HEK293 (cell line): ENCODE measurements at regions of chr7 and their contacts with region 1.

Region 1: DNA sequence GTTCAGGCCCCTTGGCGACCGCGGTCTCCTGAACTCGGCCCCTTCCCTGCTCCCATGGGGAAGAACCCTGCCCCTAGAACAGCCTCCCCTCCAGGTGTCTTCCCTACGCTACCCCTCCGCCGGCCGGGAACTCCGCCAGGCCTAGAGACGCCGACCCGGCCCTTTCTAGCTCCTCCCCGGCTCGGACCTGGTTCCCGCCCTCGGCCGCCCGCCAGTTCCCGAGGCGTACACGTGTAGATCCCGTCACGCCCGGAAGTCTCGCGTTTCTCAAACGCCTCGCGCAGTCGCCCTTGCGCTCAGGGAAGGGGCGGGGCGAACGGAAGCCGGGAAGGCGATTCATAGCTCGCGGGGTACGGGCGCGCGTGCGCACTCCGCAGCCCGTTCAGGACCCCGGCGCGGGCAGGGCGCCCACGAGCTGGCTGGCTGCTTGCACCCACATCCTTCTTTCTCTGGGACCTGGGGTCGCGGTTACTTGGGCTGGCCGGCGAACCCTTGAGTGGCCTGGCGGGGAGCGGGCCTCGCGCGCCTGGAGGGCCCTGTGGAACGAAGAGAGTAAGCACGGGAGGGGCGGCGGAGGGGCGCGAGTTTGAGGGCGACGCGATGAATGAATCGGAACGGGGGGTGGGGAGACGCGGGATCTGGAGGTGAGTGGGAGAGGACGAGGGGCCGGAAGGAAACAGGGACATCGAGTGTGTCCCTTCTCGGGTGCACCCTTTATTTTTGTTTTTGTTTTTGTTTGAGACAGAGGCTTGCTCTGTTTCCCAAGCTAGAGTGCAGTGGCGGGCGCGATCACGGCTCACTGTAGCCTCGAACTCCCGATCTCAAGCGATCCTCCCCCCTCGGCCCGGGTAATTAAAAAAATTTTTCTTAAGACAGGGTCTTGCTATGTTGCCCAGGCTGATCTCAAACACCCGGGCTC is at the start of gene POP7:
- H3K4me3 ChIP-seq: peak within 1 kb of the TSS; percentile 92
- H3K27ac ChIP-seq: peak within 1 kb of the TSS; percentile 87
- H3K4me1 ChIP-seq: no peaks in the 10 kb centered on the region
- CTCF ChIP-seq: no peak

Region 2: GRCh38 chr7:100568896-100569844 is 136.8 kb before region 1 on chr7:
- CTCF ChIA-PET with region 1: interaction called, 11 read pairs
- POLR2A ChIA-PET with region 1: interaction called, 10 read pairs
- H3K4me3 ChIP-seq: no peak overlapping the region
- H3K27ac ChIP-seq: no peak overlapping the region
- H3K4me1 ChIP-seq: peaks cover 2% of the 10 kb centered on the region; the same call in 1 of the 2 replicates
- CTCF ChIP-seq: peak; percentile 87

Region 3: GRCh38 chr7:100719523-100720319 is 13.7 kb after region 1 on chr7:
- CTCF ChIA-PET with region 1: interaction called, 100 read pairs
- POLR2A ChIA-PET with region 1: interaction called, 22 read pairs
- H3K4me3 ChIP-seq: no peak overlapping the region
- H3K27ac ChIP-seq: no peak overlapping the region
- H3K4me1 ChIP-seq: no peaks in the 10 kb centered on the region
- CTCF ChIP-seq: no peak

Region 4: GRCh38 chr7:100739934-100740333 is 33.9 kb after region 1 on chr7:
- CTCF ChIA-PET with region 1: no interaction called
- POLR2A ChIA-PET with region 1: no interaction called
- H3K4me3 ChIP-seq: no peak overlapping the region
- H3K27ac ChIP-seq: no peak overlapping the region
- H3K4me1 ChIP-seq: no peaks in the 10 kb centered on the region
- CTCF ChIP-seq: no peak

Region 5: GRCh38 chr7:100827330-100828227 is 121.6 kb after region 1 on chr7 and contains the start of gene EPHB4:
- CTCF ChIA-PET with region 1: interaction called, 5 read pairs
- POLR2A ChIA-PET with region 1: interaction called, 25 read pairs
- H3K4me3 ChIP-seq: peak within 1 kb of the TSS; percentile 82
- H3K27ac ChIP-seq: peak within 1 kb of the TSS; percentile 91; the same call in 1 of the 2 replicates
- H3K4me1 ChIP-seq: no peaks in the 10 kb centered on the region
- CTCF ChIP-seq: peak; percentile 98

Region 6: DNA sequence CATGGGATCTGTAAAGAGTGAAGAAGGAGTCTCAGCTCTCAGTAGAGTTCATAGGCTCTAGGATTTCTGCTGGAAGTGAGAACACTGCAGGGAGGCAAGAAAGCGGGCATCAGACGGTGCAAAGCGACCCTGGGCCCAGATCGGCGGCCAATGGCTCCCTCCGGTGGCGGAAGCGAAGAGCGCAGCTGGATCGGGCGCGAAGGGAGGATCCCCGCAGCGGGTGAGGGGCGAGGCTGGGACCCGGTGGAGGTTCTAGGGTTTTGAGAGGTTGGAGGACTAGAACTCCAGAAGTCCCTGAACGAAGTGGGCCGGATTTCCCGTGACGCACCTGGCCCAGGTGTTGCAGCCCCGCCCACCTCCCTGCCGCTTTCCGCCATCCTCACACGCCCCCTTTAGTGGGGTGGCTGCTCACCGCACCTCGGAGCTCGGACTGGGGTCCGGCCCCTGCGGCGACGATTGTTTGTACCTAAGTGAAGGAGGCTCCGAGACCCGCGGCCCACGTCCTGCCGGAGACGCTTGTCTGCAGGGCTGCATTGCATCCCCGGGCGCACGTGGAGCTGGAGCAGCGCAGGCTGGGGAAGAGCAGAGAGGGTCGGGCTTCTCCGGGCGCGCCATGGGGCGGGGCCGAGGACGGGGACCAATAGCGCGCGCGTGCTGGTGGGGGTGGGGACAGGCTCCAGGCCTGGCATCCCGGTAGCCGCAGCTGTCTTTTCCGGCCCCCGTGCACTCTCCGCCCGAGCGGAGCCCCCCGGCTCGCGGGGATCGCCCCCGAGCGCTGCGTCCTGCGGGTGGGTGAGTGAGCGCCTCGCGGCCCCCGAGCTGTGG is 146.2 kb after region 1 on chr7 and contains the start of gene SLC12A9:
- CTCF ChIA-PET with region 1: interaction called, 89 read pairs
- POLR2A ChIA-PET with region 1: interaction called, 22 read pairs
- H3K4me3 ChIP-seq: peak within 1 kb of the TSS; percentile 59
- H3K27ac ChIP-seq: peak within 1 kb of the TSS; percentile 54; the same call in 1 of the 2 replicates
- H3K4me1 ChIP-seq: peaks cover 3% of the 10 kb centered on the region; the same call in 1 of the 2 replicates
- CTCF ChIP-seq: peak; percentile 95

Region 7: GRCh38 chr7:100889761-100890634 is 184.0 kb after region 1 on chr7:
- CTCF ChIA-PET with region 1: no interaction called
- POLR2A ChIA-PET with region 1: interaction called, 17 read pairs
- H3K4me3 ChIP-seq: peak overlapping the region; percentile 48
- H3K27ac ChIP-seq: peak overlapping the region; percentile 37; the same call in 1 of the 2 replicates
- H3K4me1 ChIP-seq: peaks cover 4% of the 10 kb centered on the region; the same call in 1 of the 2 replicates
- CTCF ChIP-seq: peak; percentile 35; the same call in 1 of the 2 replicates

Region 8: GRCh38 chr7:100991631-100992030 is 285.6 kb after region 1 on chr7:
- CTCF ChIA-PET with region 1: no interaction called
- POLR2A ChIA-PET with region 1: no interaction called
- H3K4me3 ChIP-seq: no peak overlapping the region
- H3K27ac ChIP-seq: no peak overlapping the region
- H3K4me1 ChIP-seq: no peaks in the 10 kb centered on the region
- CTCF ChIP-seq: no peak